Uterus (tissue), 4 donors: ENCODE measurements at regions of chr9 and their contacts with region 1.

Region 1: DNA sequence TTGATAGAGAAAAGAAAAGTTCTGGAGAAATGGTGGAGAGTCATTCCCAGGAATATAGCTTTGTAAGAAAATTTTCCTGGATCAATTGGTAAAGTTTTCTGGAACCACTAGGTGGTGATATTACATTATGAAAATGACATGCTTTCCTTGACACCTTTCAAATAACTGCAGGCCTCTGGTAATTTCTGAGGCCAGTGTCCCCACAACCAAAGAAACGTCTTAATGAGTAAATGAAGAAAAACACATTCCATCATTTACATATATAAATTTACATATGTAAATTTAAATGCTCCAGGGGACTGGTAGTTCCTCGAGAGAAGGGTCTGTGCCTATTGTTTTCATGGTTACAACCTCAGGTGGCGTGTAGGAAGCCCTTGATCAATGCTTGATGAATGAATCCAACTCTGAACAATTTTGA is 17.2 kb upstream of the RGS3 start:
- DNase-seq: no peak
- H3K4me3 ChIP-seq: no peak overlapping the region
- H3K27ac ChIP-seq: no peak overlapping the region
- H3K4me1 ChIP-seq: no peaks in the 10 kb centered on the region
- H3K27me3 ChIP-seq: no peaks in the 10 kb centered on the region
- CTCF ChIP-seq: peak; percentile 55 to 81 (median 76)
- POLR2A ChIP-seq: no peak

Region 2: GRCh38 chr9:113591001-113591898 is 144.9 kb after region 1 on chr9:
- intact Hi-C with region 1: loop called (anchors 5 kb)
- DNase-seq: peak; percentile 86 to 88
- H3K4me3 ChIP-seq: no peak overlapping the region
- H3K27ac ChIP-seq: peak overlapping the region in 1 of 2 donors; percentile 17
- H3K4me1 ChIP-seq: peaks cover 0 to 9% of the 10 kb centered on the region in 2 donors
- H3K27me3 ChIP-seq: no peaks in the 10 kb centered on the region
- CTCF ChIP-seq: peak; percentile 90 to 97 (median 95)
- POLR2A ChIP-seq: no peak

Region 3: DNA sequence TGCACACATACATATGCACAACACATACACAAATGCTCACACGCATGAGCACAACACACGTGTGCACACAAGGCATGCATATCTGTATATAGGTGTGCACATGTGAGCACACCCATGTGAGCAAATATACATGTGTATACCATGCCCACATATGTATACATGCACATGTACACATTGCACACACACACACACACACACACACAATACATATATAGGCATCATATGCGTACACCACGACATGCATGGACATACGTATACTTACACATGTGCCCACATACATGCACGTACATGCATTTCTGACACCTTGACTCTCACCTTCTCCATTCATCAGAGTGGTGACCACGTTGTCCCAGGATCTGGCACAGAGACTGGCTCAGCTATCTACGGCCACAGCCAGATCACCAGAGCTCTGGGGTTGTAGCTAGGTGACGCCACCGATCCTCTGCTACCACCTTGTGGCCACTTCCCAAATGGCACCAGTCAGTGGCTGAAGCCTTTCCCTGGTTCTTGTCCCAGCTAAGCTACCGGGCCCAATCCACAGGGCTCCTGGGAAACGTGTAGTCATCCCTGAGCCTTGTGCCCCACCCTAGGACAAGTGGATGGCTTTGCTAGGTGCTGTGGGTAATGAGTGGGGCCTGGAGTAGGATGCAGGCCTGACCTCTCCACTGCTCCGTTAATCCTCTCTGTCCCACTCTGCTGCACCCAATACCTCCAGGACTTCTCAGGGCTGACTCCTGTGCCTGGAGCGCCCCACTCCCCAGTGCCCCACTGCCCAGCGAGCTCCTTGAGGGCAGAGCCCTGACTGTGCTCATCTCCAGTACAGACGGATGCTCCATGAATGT is 211.6 kb after region 1 on chr9:
- intact Hi-C with region 1: loop called (anchors 5 kb)
- DNase-seq: peak; percentile 83 to 88
- H3K4me3 ChIP-seq: no peak overlapping the region
- H3K27ac ChIP-seq: no peak overlapping the region
- H3K4me1 ChIP-seq: peaks cover 0 to 6% of the 10 kb centered on the region in 2 donors
- H3K27me3 ChIP-seq: no peaks in the 10 kb centered on the region
- CTCF ChIP-seq: peak; percentile 92 to 98 (median 95)
- POLR2A ChIP-seq: no peak